ENCODE measurements at regions of chr2 and their contacts with region 1.

Region 1: GRCh38 chr2:20682167-20682920 is 15.4 kb downstream of the GDF7 start:
- DNase-seq: peak; percentile 46
- H3K4me3 ChIP-seq: no peak overlapping the region
- H3K27ac ChIP-seq: no peak overlapping the region
- H3K4me1 ChIP-seq: peaks cover 5% of the 10 kb centered on the region
- H3K27me3 ChIP-seq: no peaks in the 10 kb centered on the region
- CTCF ChIP-seq: peak; percentile 58 to 75
- POLR2A ChIP-seq: no peak

Region 2: GRCh38 chr2:20755132-20755800 is 72.9 kb after region 1 on chr2:
- CTCF ChIA-PET with region 1: no interaction called
- POLR2A ChIA-PET with region 1: no interaction called
- dilution Hi-C with region 1: no loop called
- intact Hi-C with region 1: loop called (anchors 1 kb)
- DNase-seq: peak; percentile 52
- H3K4me3 ChIP-seq: no peak overlapping the region
- H3K27ac ChIP-seq: no peak overlapping the region
- H3K4me1 ChIP-seq: no peaks in the 10 kb centered on the region
- H3K27me3 ChIP-seq: no peaks in the 10 kb centered on the region
- CTCF ChIP-seq: peak in 1 of 2 donors; percentile 38
- POLR2A ChIP-seq: no peak

Region 3: GRCh38 chr2:20822535-20823490 is 140.5 kb after region 1 on chr2 and contains the start of gene LDAH:
- CTCF ChIA-PET with region 1: no interaction called
- POLR2A ChIA-PET with region 1: no interaction called
- dilution Hi-C with region 1: no loop called
- intact Hi-C with region 1: loop called (anchors 5 kb)
- DNase-seq: peak; percentile 87
- H3K4me3 ChIP-seq: peak within 1 kb of the TSS; percentile 51 to 89 (median 66)
- H3K27ac ChIP-seq: peak within 1 kb of the TSS; percentile 72
- H3K4me1 ChIP-seq: no peaks in the 10 kb centered on the region
- H3K27me3 ChIP-seq: peaks cover 0 to 2% of the 10 kb centered on the region in 2 experiments
- CTCF ChIP-seq: no peak
- POLR2A ChIP-seq: peak; percentile 90
- total RNA-seq, gene LDAH: 24.0 and 24.2 TPM in 2 replicates

Region 4: DNA sequence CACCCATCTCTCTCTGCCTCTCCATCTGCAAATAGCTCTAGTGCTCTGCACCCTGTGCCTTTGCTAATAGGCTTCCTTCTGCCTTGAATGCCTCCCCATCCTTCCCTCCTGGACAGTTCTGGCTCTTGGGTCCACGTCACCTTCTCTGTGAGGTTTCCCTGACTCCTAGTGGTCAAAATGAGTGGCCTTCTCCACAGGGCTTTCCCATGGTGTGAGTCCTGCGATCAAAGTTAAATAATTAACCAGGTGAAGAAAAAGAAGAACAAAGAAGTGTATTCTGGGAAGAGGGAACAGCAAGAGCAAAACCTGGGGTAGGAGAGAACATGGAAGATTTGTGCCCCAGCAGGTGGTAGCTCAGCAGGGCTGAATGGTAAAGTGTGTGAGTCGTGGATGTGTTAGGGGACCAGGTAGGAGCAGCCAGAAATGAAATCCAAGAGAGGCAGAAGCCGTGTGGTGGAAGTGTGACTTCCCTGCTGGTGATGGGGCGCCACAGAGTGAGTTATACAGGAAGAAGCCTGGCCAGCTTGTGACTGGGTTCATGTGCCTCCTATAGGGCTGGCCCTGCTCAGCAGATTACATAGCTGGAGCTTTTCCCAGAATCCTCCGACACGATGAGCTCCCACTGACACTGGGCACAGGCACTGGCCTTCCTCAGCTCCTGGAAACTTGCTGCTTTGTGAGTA is 234.4 kb after region 1 on chr2:
- CTCF ChIA-PET with region 1: interaction called, 3 read pairs
- POLR2A ChIA-PET with region 1: no interaction called
- dilution Hi-C with region 1: no loop called
- intact Hi-C with region 1: loop called (anchors 5 kb)
- DNase-seq: peak; percentile 20
- H3K4me3 ChIP-seq: no peak overlapping the region
- H3K27ac ChIP-seq: no peak overlapping the region
- H3K4me1 ChIP-seq: no peaks in the 10 kb centered on the region
- H3K27me3 ChIP-seq: no peaks in the 10 kb centered on the region
- CTCF ChIP-seq: peak in 1 of 2 donors; percentile 24
- POLR2A ChIP-seq: no peak

Measured in endothelial cell of umbilical vein (primary cell).